A549 (cell line): ENCODE measurements at regions of chr11 and their contacts with region 1.

Region 1: GRCh38 chr11:93741094-93741881 is at the starts of genes C11orf54 and TAF1D:
- DNase-seq: peak; percentile 75 to 97
- ATAC-seq: peak; percentile 87
- H3K4me3 ChIP-seq: peak within 1 kb of the TSS; percentile 90
- H3K27ac ChIP-seq: peak within 1 kb of the TSS; percentile 92 to 98
- H3K4me1 ChIP-seq: peaks cover 52% of the 10 kb centered on the region
- CTCF ChIP-seq: no peak
- EP300 ChIP-seq: no peak
- POLR2A ChIP-seq: peak; percentile 89
- RAD21 ChIP-seq: no peak
- polyA plus RNA-seq, gene C11orf54: 26.8 and 27.6 TPM in 2 replicates
- polyA plus RNA-seq, gene TAF1D: 132 and 218 TPM in 2 replicates

Region 2: GRCh38 chr11:93727985-93728791 is 13.1 kb before region 1 on chr11:
- CTCF ChIA-PET with region 1: interaction called, 3 read pairs
- POLR2A ChIA-PET with region 1: interaction called, 16 read pairs
- DNase-seq: no peak
- ATAC-seq: peak; percentile 23 to 45; a peak in 4 of 6 replicates
- H3K4me3 ChIP-seq: no peak overlapping the region
- H3K27ac ChIP-seq: no peak overlapping the region
- H3K4me1 ChIP-seq: peaks cover 14% of the 10 kb centered on the region; the same call in 1 of the 3 replicates
- CTCF ChIP-seq: no peak
- EP300 ChIP-seq: no peak
- POLR2A ChIP-seq: no peak
- RAD21 ChIP-seq: no peak

Region 3: GRCh38 chr11:93784152-93784934 is 43.1 kb after region 1 on chr11 and contains the start of gene MED17:
- CTCF ChIA-PET with region 1: interaction called, 3 read pairs
- POLR2A ChIA-PET with region 1: interaction called, 48 read pairs
- DNase-seq: peak; percentile 89 to 90
- ATAC-seq: peak; percentile 99
- H3K4me3 ChIP-seq: peak within 1 kb of the TSS; percentile 83
- H3K27ac ChIP-seq: peak within 1 kb of the TSS; percentile 91 to 99
- H3K4me1 ChIP-seq: peaks cover 20% of the 10 kb centered on the region
- CTCF ChIP-seq: peak; percentile 21; the same call in 2 of the 3 replicates
- EP300 ChIP-seq: no peak
- POLR2A ChIP-seq: peak; percentile 80
- RAD21 ChIP-seq: 0 out of 5 replicates have a peak, but pooled peaks of 1 of the 2 experiments have one; percentile 7
- polyA plus RNA-seq, gene MED17: 19.2 and 20.3 TPM in 2 replicates